ENCODE measurements at regions of chr3 and their contacts with region 1.

Region 1: DNA sequence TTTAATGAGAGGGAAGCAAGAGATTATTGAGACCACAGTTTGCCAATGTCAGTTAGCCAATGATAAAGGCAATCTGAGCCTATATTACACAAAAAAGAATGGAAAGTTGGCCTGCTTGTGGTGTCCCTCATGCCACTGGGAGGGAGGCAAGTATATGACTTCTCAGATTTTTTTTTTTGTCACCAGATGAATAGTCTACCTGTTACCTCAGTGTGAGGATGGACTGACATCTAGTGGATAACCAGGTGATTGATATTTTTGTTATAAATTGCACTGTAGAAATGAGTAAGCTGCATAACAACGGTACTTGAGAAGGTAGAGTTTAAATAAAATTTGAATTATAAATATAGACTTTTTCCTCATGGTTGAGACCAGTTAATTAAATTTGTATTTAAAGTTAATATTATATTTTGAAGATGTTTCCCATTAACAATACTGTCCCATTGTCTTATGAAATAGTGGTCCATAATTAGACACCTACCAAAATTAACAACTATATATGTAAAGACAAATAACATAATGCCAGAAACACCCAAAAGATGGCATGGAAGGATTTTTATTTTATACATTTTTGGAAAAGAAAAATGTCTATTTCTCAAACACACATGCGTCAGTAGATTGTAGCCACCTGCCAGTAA is 237.8 kb upstream of the GADL1 start:
- DNase-seq: peak in 1 of 4 donors; percentile 17
- ATAC-seq: peak; percentile 84
- H3K4me3 ChIP-seq: no peak overlapping the region
- H3K27ac ChIP-seq: no peak overlapping the region
- H3K4me1 ChIP-seq: no peaks in the 10 kb centered on the region
- H3K27me3 ChIP-seq: no peaks in the 10 kb centered on the region
- CTCF ChIP-seq: peak; percentile 11 to 43

Region 2: GRCh38 chr3:30073622-30074021 is 1058.6 kb before region 1 on chr3:
- intact Hi-C with region 1: no loop called
- DNase-seq: no peak
- ATAC-seq: no peak
- H3K4me3 ChIP-seq: no peak overlapping the region
- H3K27ac ChIP-seq: no peak overlapping the region
- H3K4me1 ChIP-seq: no peaks in the 10 kb centered on the region
- H3K27me3 ChIP-seq: no peaks in the 10 kb centered on the region
- CTCF ChIP-seq: no peak

Region 3: GRCh38 chr3:30779686-30780287 is 352.5 kb before region 1 on chr3:
- intact Hi-C with region 1: loop called in 1 of 2 experiments (anchors 10 kb)
- DNase-seq: no peak
- ATAC-seq: peak; percentile 82
- H3K4me3 ChIP-seq: no peak overlapping the region
- H3K27ac ChIP-seq: no peak overlapping the region
- H3K4me1 ChIP-seq: no peaks in the 10 kb centered on the region
- H3K27me3 ChIP-seq: no peaks in the 10 kb centered on the region
- CTCF ChIP-seq: peak in 1 of 2 donors; percentile 32

Measured in left lung (tissue), 14 donors.